Left ventricle myocardium superior (tissue), 1 donor: ENCODE measurements at regions of chr16 and their contacts with region 1.

Region 1: DNA sequence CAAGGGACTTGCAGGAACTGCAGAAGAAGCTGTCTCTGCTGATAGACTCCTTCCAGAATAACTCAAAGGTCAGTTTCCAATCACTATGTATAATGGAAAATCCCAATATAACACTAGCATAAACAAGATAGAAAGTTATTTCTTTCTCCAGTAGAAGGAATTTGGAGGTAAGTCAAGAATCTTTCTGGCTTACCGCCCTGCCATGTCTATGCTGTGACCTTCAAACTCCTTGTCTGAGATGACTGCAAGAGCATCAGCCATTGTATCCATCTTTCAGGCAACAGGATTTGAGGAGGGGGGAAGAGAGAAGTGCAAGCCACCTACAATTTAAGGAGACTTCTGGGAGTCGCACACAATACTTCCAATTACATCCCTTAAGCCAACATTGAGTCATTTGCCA is 2.7 kb downstream of the LDAF1 start:
- DNase-seq: no peak
- ATAC-seq: peak; percentile 21

Region 2: DNA sequence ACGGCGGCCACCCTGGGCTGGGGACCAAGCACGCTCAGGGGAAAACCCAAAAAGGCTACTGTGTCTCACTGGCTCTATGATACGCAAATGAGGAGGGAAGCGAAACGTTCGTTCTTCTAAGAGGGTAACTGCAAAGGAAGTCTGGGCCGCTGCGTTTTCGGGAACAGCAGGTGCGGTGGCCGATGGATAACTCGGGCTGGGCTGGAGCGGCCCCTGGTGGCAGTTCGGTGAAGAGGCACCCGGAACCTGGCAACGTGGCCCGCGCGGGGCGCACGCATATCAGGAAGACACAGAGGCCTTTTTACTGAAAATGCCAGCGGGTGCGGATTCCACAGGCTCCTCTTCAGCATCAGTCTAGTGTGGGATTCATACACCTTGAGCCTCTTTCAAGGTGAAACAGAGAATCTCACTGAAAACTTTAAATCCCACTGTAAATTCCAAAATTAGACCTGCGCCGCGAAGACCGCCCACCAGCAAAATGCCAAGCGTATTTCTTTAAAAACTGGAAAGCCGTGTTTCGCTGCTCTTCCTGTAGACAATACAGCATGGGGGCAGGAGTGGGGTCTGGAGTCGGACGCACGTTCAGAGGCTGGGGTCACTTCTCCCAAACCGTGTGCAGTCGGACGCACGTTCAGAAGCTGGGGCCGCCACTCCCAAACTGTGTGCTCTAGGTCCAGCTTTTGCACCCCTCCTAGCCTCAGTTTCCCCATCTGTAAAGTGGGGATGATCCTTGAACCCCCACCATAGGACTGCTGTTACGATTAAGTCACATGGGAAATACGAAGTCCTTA is 393.8 kb after region 1 on chr16:
- intact Hi-C with region 1: loop called (anchors 2 kb)
- DNase-seq: peak; percentile 94
- ATAC-seq: peak; percentile 72